ENCODE measurements at regions of chr2 and their contacts with region 1.

Region 1: GRCh38 chr2:159157361-159158209 is 128.9 kb downstream of the WDSUB1 start:
- DNase-seq: peak in 2 of 9 donors; percentile 11 to 12
- ATAC-seq: peak; percentile 26
- H3K4me3 ChIP-seq: no peak overlapping the region
- H3K4me3 Mint-ChIP-seq: peak overlapping the region in 4 of 10 donors; percentile 14 to 22 (median 18)
- H3K27ac ChIP-seq: no peak overlapping the region
- H3K27ac Mint-ChIP-seq: peak overlapping the region in 3 of 9 donors; percentile 3 to 60 (median 41)
- H3K4me1 ChIP-seq: peaks cover 0 to 10% of the 10 kb centered on the region in 2 donors
- H3K4me1 Mint-ChIP-seq: peaks cover 20 to 74% (median 49%) of the 10 kb centered on the region in 7 donors
- H3K27me3 ChIP-seq: no peaks in the 10 kb centered on the region
- H3K27me3 Mint-ChIP-seq: peaks cover 0 to 5% (median 0%) of the 10 kb centered on the region in 5 donors

Region 2: GRCh38 chr2:159921752-159922404 is 764.3 kb after region 1 on chr2:
- CTCF ChIA-PET with region 1: no interaction called
- POLR2A ChIA-PET with region 1: no interaction called
- intact Hi-C with region 1: loop called in 1 of 2 experiments (anchors 10 kb)
- DNase-seq: peak; percentile 21 to 75 (median 56)
- ATAC-seq: peak; percentile 95
- H3K4me3 ChIP-seq: no peak overlapping the region
- H3K4me3 Mint-ChIP-seq: no peak overlapping the region
- H3K27ac ChIP-seq: no peak overlapping the region
- H3K27ac Mint-ChIP-seq: no peak overlapping the region
- H3K4me1 ChIP-seq: no peaks in the 10 kb centered on the region
- H3K4me1 Mint-ChIP-seq: peaks cover 0 to 7% (median 5%) of the 10 kb centered on the region in 7 donors
- H3K27me3 ChIP-seq: no peaks in the 10 kb centered on the region
- H3K27me3 Mint-ChIP-seq: peaks cover 3 to 38% (median 18%) of the 10 kb centered on the region in 5 donors

Measured in naive thymus-derived CD4-positive, alpha-beta T cell (primary cell).